Activated naive CD4-positive, alpha-beta T cell treated with anti-CD3 and anti-CD28 coated beads for 36 hours (primary cell): ENCODE measurements at regions of chr6 and their contacts with region 1.

Region 1: GRCh38 chr6:106339334-106340029 is 13.9 kb upstream of the ATG5 start:
- DNase-seq: peak; percentile 68
- H3K4me3 Mint-ChIP-seq: no peak overlapping the region
- H3K27ac Mint-ChIP-seq: no peak overlapping the region
- H3K4me1 Mint-ChIP-seq: peaks cover 2% of the 10 kb centered on the region
- H3K27me3 Mint-ChIP-seq: peaks cover 6% of the 10 kb centered on the region

Region 2: DNA sequence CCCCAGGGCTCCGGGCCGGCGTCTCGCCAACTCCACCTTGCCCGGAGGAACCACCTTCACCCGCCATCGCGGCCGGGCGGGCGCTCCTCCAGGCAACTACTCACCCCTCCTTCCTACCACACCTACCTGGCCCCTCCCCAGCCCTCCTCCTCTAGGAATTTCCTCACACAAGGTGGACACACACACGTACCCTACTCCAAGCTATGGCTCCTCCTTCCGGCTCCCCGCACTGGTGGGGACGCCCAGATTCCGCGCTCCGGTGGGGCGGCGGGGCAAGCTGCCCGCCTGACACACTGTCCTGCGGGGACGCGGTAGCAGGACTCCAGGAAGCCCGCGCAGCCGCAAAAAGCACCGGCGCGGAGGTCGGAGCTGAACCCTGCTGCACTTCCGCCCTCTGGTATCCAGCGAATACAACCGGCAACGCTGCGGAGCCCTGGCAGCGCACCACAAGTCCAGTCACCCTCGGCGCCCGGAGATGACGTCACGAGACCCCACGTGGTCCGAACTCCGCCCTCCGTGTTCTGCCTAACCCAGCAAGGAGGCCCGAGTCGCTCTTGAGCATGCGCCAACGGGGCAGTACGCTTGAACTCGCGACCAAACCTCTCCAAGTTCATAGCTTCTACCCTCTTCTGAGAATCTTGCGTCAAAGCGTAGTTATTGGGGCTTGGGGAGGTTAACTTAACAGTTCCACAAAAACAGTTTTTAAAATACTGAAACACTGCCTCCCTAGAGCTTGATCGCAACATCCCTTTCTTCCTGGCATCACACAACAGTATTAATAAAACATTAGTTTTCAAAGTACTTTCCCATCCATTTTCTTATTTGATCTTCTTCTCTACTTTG is 13.9 kb before region 1 on chr6 and contains the start of gene ATG5:
- CTCF ChIA-PET with region 1: interaction called, 17 read pairs
- intact Hi-C with region 1: no loop called
- DNase-seq: peak; percentile 100
- H3K4me3 Mint-ChIP-seq: peak within 1 kb of the TSS; percentile 99
- H3K27ac Mint-ChIP-seq: peak within 1 kb of the TSS; percentile 89
- H3K4me1 Mint-ChIP-seq: peaks cover 39% of the 10 kb centered on the region
- H3K27me3 Mint-ChIP-seq: no peaks in the 10 kb centered on the region
- total RNA-seq, gene ATG5: 20.2 to 20.7 TPM

Region 3: GRCh38 chr6:106360410-106360988 is 21.0 kb after region 1 on chr6 and contains the start of gene CRYBG1:
- CTCF ChIA-PET with region 1: interaction called, 13 read pairs
- intact Hi-C with region 1: loop called (anchors 2 kb)
- DNase-seq: peak; percentile 78
- H3K4me3 Mint-ChIP-seq: peak within 1 kb of the TSS; percentile 71
- H3K27ac Mint-ChIP-seq: no peak within 1 kb of the TSS
- H3K4me1 Mint-ChIP-seq: peaks cover 9% of the 10 kb centered on the region
- H3K27me3 Mint-ChIP-seq: peaks cover 40% of the 10 kb centered on the region
- total RNA-seq, gene CRYBG1: 12.9 to 13.0 TPM

Region 4: GRCh38 chr6:106556368-106556960 is 217.0 kb after region 1 on chr6:
- CTCF ChIA-PET with region 1: interaction called, 3 read pairs
- intact Hi-C with region 1: loop called (anchors 2 kb)
- DNase-seq: no peak
- H3K4me3 Mint-ChIP-seq: no peak overlapping the region
- H3K27ac Mint-ChIP-seq: no peak overlapping the region
- H3K4me1 Mint-ChIP-seq: peaks cover 18% of the 10 kb centered on the region
- H3K27me3 Mint-ChIP-seq: no peaks in the 10 kb centered on the region

Region 5: GRCh38 chr6:106568530-106568929 is 229.0 kb after region 1 on chr6:
- CTCF ChIA-PET with region 1: interaction called, 28 read pairs
- intact Hi-C with region 1: loop called (anchors 1 kb)
- DNase-seq: no peak
- H3K4me3 Mint-ChIP-seq: no peak overlapping the region
- H3K27ac Mint-ChIP-seq: no peak overlapping the region
- H3K4me1 Mint-ChIP-seq: peaks cover 7% of the 10 kb centered on the region
- H3K27me3 Mint-ChIP-seq: no peaks in the 10 kb centered on the region

Region 6: GRCh38 chr6:106979427-106979884 is 640.0 kb after region 1 on chr6:
- CTCF ChIA-PET with region 1: interaction called, 6 read pairs
- intact Hi-C with region 1: loop called (anchors 1 kb)
- DNase-seq: peak; percentile 87
- H3K4me3 Mint-ChIP-seq: no peak overlapping the region
- H3K27ac Mint-ChIP-seq: no peak overlapping the region
- H3K4me1 Mint-ChIP-seq: no peaks in the 10 kb centered on the region
- H3K27me3 Mint-ChIP-seq: peaks cover 33% of the 10 kb centered on the region

Region 7: GRCh38 chr6:106997390-106998158 is 658.1 kb after region 1 on chr6:
- CTCF ChIA-PET with region 1: interaction called, 4 read pairs
- intact Hi-C with region 1: loop called (anchors 1 kb)
- DNase-seq: peak; percentile 75
- H3K4me3 Mint-ChIP-seq: no peak overlapping the region
- H3K27ac Mint-ChIP-seq: no peak overlapping the region
- H3K4me1 Mint-ChIP-seq: peaks cover 3% of the 10 kb centered on the region
- H3K27me3 Mint-ChIP-seq: no peaks in the 10 kb centered on the region